AG04450 (cell line): ENCODE measurements at regions of chr3 and their contacts with region 1.

Region 1: DNA sequence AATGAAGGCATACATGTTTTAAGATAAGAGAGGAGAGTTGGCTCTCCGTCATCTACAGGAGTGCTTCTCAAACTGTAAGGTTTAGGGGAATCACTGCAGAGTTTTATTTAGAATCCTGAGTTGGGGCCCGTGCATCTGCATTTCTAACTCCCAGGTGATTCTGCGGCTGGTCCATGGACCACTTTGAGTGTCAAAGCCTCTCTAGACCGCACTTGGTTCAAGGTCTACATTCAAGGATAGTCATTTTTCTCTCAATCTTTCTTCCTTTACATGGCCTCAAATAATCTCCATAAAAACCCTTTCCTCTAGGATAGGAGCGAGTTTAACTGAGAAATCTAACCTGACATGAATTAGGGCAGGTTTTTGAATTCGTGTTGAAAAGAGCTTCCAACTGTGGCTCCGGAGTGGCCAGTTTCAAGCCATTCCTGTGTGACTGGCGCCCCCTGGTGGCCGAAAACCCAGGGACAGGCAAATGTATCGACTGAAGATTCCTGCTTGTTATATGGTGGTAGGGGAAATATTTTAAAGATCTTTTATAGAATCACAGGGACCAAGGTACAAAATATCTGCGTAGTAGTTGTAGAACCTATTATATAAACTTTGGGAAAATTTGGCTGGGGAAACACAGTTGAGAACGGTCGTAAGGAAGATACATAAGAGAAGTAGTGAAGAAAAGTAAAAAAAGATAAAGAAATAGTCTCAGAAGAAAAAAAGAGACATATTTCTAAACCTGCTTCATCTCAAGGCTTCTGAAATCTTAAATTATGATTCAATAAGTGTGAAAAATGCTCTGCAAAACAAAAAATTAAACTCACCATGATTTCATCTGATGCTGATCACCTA is 11.9 kb downstream of the GABRR3 start:
- DNase-seq: peak; percentile 41
- H3K4me3 ChIP-seq: no peak overlapping the region
- H3K27ac ChIP-seq: no peak overlapping the region
- H3K27me3 ChIP-seq: peaks cover 2% of the 10 kb centered on the region
- CTCF ChIP-seq: peak; percentile 95

Region 2: DNA sequence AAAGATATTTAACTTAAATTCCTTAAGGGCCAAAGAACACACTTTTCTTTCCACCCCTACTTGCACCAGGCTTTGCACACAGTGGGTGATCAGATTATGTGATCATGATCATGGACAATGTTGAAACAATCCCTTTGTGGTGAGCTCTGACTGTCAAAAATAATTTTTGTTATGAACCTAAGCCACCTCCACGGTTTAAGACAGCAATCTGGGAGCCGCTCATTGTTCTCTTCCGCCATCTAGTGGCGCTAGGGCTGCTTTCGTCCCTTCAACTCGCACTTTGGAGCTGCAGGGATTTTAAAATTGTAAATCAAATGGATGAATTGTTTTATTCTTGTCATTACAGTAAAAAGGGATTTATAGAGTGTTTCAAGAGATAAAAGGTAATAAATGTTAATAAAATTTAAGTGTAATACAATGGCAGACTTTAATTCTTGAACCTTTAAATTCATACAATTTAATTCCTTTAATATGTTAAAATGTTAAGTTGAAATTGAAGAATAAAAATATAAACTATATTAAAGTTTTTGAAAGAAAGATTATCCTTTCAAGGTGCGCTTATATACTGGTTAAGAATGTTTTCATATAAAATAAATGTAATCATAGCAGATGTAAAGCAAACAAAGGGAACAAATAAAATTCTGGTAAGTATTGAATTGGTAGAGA is 303.9 kb before region 1 on chr3:
- CTCF ChIA-PET with region 1: interaction called, 21 read pairs
- POLR2A ChIA-PET with region 1: no interaction called
- DNase-seq: peak; percentile 34
- H3K4me3 ChIP-seq: no peak overlapping the region; the same call in 1 of the 2 replicates
- H3K27ac ChIP-seq: no peak overlapping the region
- H3K27me3 ChIP-seq: no peaks in the 10 kb centered on the region
- CTCF ChIP-seq: peak; percentile 98

Region 3: GRCh38 chr3:97793420-97794019 is 229.7 kb before region 1 on chr3:
- CTCF ChIA-PET with region 1: interaction called, 181 read pairs
- POLR2A ChIA-PET with region 1: interaction called, 3 read pairs
- DNase-seq: peak; percentile 20
- H3K4me3 ChIP-seq: no peak overlapping the region
- H3K27ac ChIP-seq: no peak overlapping the region
- H3K27me3 ChIP-seq: no peaks in the 10 kb centered on the region
- CTCF ChIP-seq: peak; percentile 79

Region 4: DNA sequence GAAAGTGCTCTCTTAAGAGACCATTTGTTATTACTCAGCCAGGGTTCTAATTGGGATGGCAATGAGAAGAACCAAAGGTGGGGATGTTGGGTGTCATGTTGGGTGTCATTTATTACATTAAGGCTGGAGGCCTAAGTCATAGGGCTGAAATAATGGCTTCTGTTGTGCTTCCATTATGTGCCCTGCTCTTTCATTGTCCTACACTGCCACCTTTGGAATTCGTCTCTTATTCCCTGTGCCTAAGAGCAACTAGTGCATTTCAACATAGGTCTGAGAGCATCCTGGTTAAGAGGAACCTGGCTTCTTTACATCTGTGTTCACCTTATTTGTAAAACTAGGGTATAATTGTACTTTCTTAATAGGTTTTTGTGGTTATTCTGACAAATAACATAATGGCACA is 83.2 kb before region 1 on chr3:
- CTCF ChIA-PET with region 1: interaction called, 12 read pairs
- POLR2A ChIA-PET with region 1: no interaction called
- DNase-seq: no peak
- H3K4me3 ChIP-seq: no peak overlapping the region
- H3K27ac ChIP-seq: no peak overlapping the region
- H3K27me3 ChIP-seq: no peaks in the 10 kb centered on the region
- CTCF ChIP-seq: no peak

Region 5: GRCh38 chr3:98039322-98040024 is 16.3 kb after region 1 on chr3:
- CTCF ChIA-PET with region 1: interaction called, 95 read pairs
- POLR2A ChIA-PET with region 1: no interaction called
- DNase-seq: peak; percentile 65
- H3K4me3 ChIP-seq: peak overlapping the region; percentile 61
- H3K27ac ChIP-seq: no peak overlapping the region
- H3K27me3 ChIP-seq: no peaks in the 10 kb centered on the region
- CTCF ChIP-seq: peak; percentile 78

Region 6: GRCh38 chr3:98073486-98073885 is 50.3 kb after region 1 on chr3:
- CTCF ChIA-PET with region 1: no interaction called
- POLR2A ChIA-PET with region 1: no interaction called
- DNase-seq: no peak
- H3K4me3 ChIP-seq: no peak overlapping the region
- H3K27ac ChIP-seq: no peak overlapping the region
- H3K27me3 ChIP-seq: no peaks in the 10 kb centered on the region
- CTCF ChIP-seq: no peak